Ovary (tissue), 10 donors: ENCODE measurements at regions of chr14 and their contacts with region 1.

Region 1: GRCh38 chr14:42565556-42565955 is 958.9 kb downstream of the LRFN5 start:
- DNase-seq: no peak
- H3K4me3 ChIP-seq: no peak overlapping the region
- H3K27ac ChIP-seq: no peak overlapping the region
- H3K4me1 ChIP-seq: no peaks in the 10 kb centered on the region
- H3K27me3 ChIP-seq: no peaks in the 10 kb centered on the region
- CTCF ChIP-seq: no peak
- EP300 ChIP-seq: no peak
- POLR2A ChIP-seq: no peak

Region 2: GRCh38 chr14:42642787-42643186 is 77.2 kb after region 1 on chr14:
- intact Hi-C with region 1: no loop called
- DNase-seq: no peak
- H3K4me3 ChIP-seq: no peak overlapping the region
- H3K27ac ChIP-seq: no peak overlapping the region
- H3K4me1 ChIP-seq: no peaks in the 10 kb centered on the region
- H3K27me3 ChIP-seq: no peaks in the 10 kb centered on the region
- CTCF ChIP-seq: no peak
- EP300 ChIP-seq: no peak
- POLR2A ChIP-seq: no peak

Region 3: GRCh38 chr14:43200519-43200918 is 635.0 kb after region 1 on chr14:
- intact Hi-C with region 1: no loop called
- DNase-seq: no peak
- H3K4me3 ChIP-seq: no peak overlapping the region
- H3K27ac ChIP-seq: no peak overlapping the region
- H3K4me1 ChIP-seq: no peaks in the 10 kb centered on the region
- H3K27me3 ChIP-seq: no peaks in the 10 kb centered on the region
- CTCF ChIP-seq: no peak
- EP300 ChIP-seq: no peak
- POLR2A ChIP-seq: no peak

Region 4: DNA sequence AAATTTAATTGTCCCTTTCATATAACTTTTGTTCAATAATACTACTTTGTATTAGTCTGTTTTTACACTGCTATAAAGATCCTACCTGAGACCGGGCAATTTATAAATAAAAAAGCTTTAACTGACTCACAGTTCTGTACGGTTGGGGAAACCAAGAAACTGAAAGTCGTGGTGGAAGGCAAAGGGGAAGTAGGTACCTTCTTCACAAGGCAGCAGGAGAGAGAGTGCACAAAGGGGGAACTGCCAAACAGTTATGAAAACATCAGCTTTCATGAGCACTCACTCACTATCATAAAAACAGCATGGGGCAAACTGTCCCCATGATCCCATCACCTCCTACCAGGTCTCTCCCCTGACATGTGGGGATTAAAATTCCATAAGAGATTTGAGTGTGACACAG is 872.5 kb after region 1 on chr14:
- intact Hi-C with region 1: loop called in 1 of 4 experiments (anchors 5 kb)
- DNase-seq: no peak
- H3K4me3 ChIP-seq: no peak overlapping the region
- H3K27ac ChIP-seq: no peak overlapping the region
- H3K4me1 ChIP-seq: no peaks in the 10 kb centered on the region
- H3K27me3 ChIP-seq: no peaks in the 10 kb centered on the region
- CTCF ChIP-seq: no peak
- EP300 ChIP-seq: no peak
- POLR2A ChIP-seq: no peak